GM10248 (cell line): ENCODE measurements at regions of chr20 and their contacts with region 1.

Region 1: DNA sequence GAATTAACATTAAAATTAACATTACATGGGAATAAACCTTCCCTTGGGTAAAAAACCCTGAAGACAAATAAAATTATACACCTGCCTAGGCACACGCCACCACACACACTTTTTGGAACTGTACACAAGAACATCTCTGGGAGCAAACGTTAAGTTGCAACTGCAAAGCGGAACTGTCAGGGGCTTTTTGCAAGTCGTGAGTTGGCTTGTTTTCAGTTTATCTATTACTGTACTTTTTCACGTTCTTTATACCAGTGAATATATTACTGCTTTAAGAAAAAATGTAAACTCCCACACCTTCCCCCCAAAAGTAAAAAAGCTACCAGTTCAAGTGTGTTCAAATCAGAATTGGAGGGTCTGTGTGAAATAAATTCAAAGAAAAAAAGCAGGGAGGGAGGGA is 65.5 kb upstream of the NFATC2 start:
- DNase-seq: peak; percentile 43
- CTCF ChIP-seq: no peak

Region 2: DNA sequence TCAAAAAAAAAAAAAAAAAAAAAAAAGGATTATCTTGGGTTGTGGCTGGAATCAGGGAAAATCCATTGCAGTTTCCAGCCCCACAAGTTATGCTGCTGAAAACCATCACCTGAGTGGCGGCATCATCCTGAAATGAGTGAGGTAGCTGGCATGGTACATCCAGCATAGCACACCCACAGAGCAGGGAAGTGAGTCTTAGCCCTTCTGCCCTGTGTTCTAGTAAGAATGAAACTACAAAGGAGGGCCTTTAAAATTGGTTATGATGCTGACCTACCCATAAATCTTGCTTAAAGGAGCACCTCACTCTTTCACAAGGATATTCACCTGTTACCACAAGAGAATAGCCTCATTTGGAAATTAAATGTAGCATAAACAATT is 184.8 kb before region 1 on chr20:
- CTCF ChIA-PET with region 1: no interaction called
- POLR2A ChIA-PET with region 1: interaction called, 10 read pairs
- DNase-seq: peak; percentile 59
- CTCF ChIP-seq: no peak